ENCODE measurements at regions of chr4 and their contacts with region 1.

Region 1: DNA sequence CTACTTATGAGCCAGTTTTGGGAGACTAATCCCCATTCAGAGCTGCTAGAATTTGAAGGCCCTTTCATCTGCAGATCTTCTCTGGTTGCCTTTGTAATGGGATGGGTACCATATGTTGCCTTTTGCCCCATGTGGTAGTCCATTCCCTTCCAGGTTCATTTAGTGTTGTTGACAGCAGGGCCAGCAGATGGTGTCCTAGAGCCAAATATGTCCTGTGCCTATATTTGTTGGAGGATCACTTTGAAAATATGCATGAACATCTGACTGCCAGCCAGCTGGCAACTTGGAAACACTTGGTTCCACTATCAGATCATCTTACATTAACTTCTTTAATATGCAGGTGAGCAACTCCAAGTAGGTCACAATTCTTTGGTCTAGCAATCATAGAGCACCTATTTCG is 30.4 kb downstream of the CFAP299 start:
- DNase-seq: peak; percentile 25 to 75 (median 53)
- ATAC-seq: peak; percentile 70 to 84 (median 74)
- H3K4me3 ChIP-seq: no peak overlapping the region
- H3K4me3 Mint-ChIP-seq: no peak overlapping the region
- H3K27ac ChIP-seq: no peak overlapping the region
- H3K27ac Mint-ChIP-seq: peak overlapping the region; percentile 16 to 56
- H3K4me1 ChIP-seq: no peaks in the 10 kb centered on the region
- H3K4me1 Mint-ChIP-seq: peaks cover 6 to 10% (median 9%) of the 10 kb centered on the region in 3 donors
- H3K27me3 ChIP-seq: peaks cover 0 to under 1% of the 10 kb centered on the region in 2 experiments
- H3K27me3 Mint-ChIP-seq: peaks cover 0 to 1% of the 10 kb centered on the region in 2 donors

Region 2: GRCh38 chr4:80335554-80336358 is 30.2 kb before region 1 on chr4 and contains the start of gene CFAP299:
- CTCF ChIA-PET with region 1: no interaction called
- POLR2A ChIA-PET with region 1: no interaction called
- DNase-seq: peak in 33 of 35 experiments; percentile 14 to 58 (median 31)
- ATAC-seq: peak; percentile 68 to 90 (median 82)
- H3K4me3 ChIP-seq: peak within 1 kb of the TSS; percentile 51 to 93
- H3K4me3 Mint-ChIP-seq: peak within 1 kb of the TSS; percentile 75 to 89 (median 80)
- H3K27ac ChIP-seq: no peak within 1 kb of the TSS
- H3K27ac Mint-ChIP-seq: no peak within 1 kb of the TSS
- H3K4me1 ChIP-seq: peaks cover 2 to 12% of the 10 kb centered on the region in 2 experiments
- H3K4me1 Mint-ChIP-seq: peaks cover 8 to 15% (median 14%) of the 10 kb centered on the region in 3 donors
- H3K27me3 ChIP-seq: peaks cover 0 to 20% of the 10 kb centered on the region in 2 experiments
- H3K27me3 Mint-ChIP-seq: peaks cover 5 to 34% of the 10 kb centered on the region in 2 donors
- total RNA-seq, gene CFAP299: 0.35 TPM in 1 of 5 donors, not detected in the others

Region 3: GRCh38 chr4:80798082-80798481 is 432.2 kb after region 1 on chr4:
- CTCF ChIA-PET with region 1: interaction called in 1 of 2 experiments, 10 read pairs
- POLR2A ChIA-PET with region 1: no interaction called
- DNase-seq: peak in 1 of 35 experiments; percentile 4
- ATAC-seq: no peak
- H3K4me3 ChIP-seq: no peak overlapping the region
- H3K4me3 Mint-ChIP-seq: no peak overlapping the region
- H3K27ac ChIP-seq: no peak overlapping the region
- H3K27ac Mint-ChIP-seq: no peak overlapping the region
- H3K4me1 ChIP-seq: peaks cover 0 to 3% of the 10 kb centered on the region in 2 experiments
- H3K4me1 Mint-ChIP-seq: peaks cover 0 to 13% (median 8%) of the 10 kb centered on the region in 3 donors
- H3K27me3 ChIP-seq: no peaks in the 10 kb centered on the region
- H3K27me3 Mint-ChIP-seq: no peaks in the 10 kb centered on the region

Region 4: GRCh38 chr4:80956421-80956820 is 590.5 kb after region 1 on chr4:
- CTCF ChIA-PET with region 1: no interaction called
- POLR2A ChIA-PET with region 1: interaction called in 1 of 2 experiments, 10 read pairs
- DNase-seq: no peak
- ATAC-seq: no peak
- H3K4me3 ChIP-seq: no peak overlapping the region
- H3K4me3 Mint-ChIP-seq: no peak overlapping the region
- H3K27ac ChIP-seq: no peak overlapping the region
- H3K27ac Mint-ChIP-seq: no peak overlapping the region
- H3K4me1 ChIP-seq: no peaks in the 10 kb centered on the region
- H3K4me1 Mint-ChIP-seq: no peaks in the 10 kb centered on the region
- H3K27me3 ChIP-seq: no peaks in the 10 kb centered on the region
- H3K27me3 Mint-ChIP-seq: no peaks in the 10 kb centered on the region

Region 5: DNA sequence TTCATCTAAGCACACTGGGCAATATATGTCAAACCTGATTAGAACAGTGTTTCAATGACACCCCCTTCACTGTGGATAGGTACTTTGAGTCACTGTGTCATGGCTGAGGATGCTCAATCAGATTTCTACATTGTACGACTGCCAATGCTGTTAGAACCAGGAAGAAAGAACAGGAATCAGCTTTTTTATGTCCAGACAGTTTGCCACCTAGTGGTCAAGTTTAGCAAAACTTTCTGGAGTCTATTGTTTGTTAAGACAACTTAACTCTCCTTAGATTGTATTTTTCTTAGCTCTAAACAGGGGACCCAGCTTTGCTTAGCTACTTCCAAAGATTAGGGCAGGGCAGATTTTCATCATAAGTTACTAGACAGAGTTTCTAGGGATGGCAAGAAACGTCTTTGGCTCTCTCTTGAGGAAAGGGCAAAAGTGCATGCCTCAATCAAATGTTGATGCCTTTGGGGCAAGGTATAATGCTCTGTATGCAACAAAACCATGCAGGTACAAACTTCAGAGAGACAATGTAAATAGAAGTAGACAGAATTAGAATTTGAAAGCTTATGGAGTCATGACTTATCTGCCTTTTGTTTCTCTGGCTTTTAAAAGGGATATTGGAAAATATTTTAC is 624.1 kb after region 1 on chr4:
- CTCF ChIA-PET with region 1: interaction called, 28 to 37 read pairs
- POLR2A ChIA-PET with region 1: interaction called in 1 of 2 experiments, 3 read pairs
- DNase-seq: peak in 12 of 35 experiments; percentile 2 to 69 (median 6)
- ATAC-seq: peak in 2 of 4 experiments; percentile 13 to 53
- H3K4me3 ChIP-seq: no peak overlapping the region
- H3K4me3 Mint-ChIP-seq: no peak overlapping the region
- H3K27ac ChIP-seq: no peak overlapping the region
- H3K27ac Mint-ChIP-seq: no peak overlapping the region
- H3K4me1 ChIP-seq: no peaks in the 10 kb centered on the region
- H3K4me1 Mint-ChIP-seq: peaks cover 0 to 5% (median 4%) of the 10 kb centered on the region in 3 donors
- H3K27me3 ChIP-seq: no peaks in the 10 kb centered on the region
- H3K27me3 Mint-ChIP-seq: peaks cover 5 to 13% of the 10 kb centered on the region in 2 donors

Region 6: DNA sequence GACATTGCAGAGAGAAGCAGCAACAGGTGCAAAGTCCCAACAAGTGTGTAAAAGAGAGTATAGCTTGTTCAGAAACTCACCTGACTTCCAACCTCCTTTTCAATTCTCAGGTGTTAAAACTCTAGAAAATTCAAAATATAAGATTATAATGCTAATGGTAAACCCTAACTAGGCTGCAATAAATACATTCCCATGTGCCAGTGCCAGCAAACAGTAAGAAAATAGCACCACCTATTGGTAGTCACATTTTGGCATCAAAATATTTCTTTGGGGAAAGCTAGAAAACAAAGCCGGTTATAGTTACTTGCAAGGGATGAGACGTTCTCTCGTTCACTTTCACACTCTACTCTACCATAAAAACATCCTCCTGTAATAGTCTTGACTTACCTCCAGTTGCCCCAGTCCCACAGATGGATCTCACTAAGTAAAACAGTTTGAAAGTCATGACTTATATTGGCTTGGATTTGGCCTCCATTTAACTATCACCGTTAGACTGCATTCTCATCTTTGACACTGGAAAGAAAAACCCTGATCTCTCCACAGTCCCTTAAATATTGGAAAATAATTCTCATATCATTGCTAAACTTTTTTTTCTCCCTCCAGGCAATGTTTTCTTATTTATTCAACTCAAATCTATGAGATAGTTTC is 674.2 kb after region 1 on chr4:
- CTCF ChIA-PET with region 1: interaction called, 13 to 29 read pairs
- POLR2A ChIA-PET with region 1: no interaction called
- DNase-seq: peak in 1 of 35 experiments; percentile 61
- ATAC-seq: peak in 2 of 4 experiments; percentile 24 to 39
- H3K4me3 ChIP-seq: no peak overlapping the region
- H3K4me3 Mint-ChIP-seq: no peak overlapping the region
- H3K27ac ChIP-seq: no peak overlapping the region
- H3K27ac Mint-ChIP-seq: no peak overlapping the region
- H3K4me1 ChIP-seq: no peaks in the 10 kb centered on the region
- H3K4me1 Mint-ChIP-seq: no peaks in the 10 kb centered on the region
- H3K27me3 ChIP-seq: peaks cover 0 to 2% of the 10 kb centered on the region in 2 experiments
- H3K27me3 Mint-ChIP-seq: peaks cover 9 to 10% of the 10 kb centered on the region in 2 donors

Measured in T-cell (primary cell).